Esophagus muscularis mucosa (tissue), 4 donors: ENCODE measurements at regions of chr9 and their contacts with region 1.

Region 1: DNA sequence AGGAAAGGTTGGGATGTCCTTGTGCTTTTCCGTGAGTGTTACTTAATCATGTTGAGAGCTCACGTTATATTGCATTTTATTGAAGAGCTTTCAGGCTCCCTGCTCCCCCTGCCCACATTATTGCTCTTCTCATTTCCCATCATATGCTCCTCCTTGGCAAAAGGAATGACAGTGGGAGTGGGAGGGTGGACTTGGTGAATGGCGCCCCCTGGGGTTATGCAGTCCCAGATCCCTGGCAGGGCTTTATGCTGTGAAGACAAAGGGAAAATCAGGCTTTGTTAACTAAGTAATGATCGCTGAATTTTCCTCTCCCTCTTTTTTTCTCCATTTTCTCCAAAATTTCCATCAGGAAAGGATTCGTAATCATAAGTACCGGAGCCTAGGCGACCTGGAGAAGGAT is 166.6 kb downstream of the SMARCA2 start:
- DNase-seq: no peak
- H3K4me3 ChIP-seq: no peak overlapping the region
- H3K27ac ChIP-seq: no peak overlapping the region
- H3K4me1 ChIP-seq: peaks cover 0 to 33% (median 18%) of the 10 kb centered on the region in 4 donors
- H3K27me3 ChIP-seq: no peaks in the 10 kb centered on the region
- CTCF ChIP-seq: peak; percentile 36 to 53 (median 40)
- EP300 ChIP-seq: no peak
- POLR2A ChIP-seq: no peak

Region 2: DNA sequence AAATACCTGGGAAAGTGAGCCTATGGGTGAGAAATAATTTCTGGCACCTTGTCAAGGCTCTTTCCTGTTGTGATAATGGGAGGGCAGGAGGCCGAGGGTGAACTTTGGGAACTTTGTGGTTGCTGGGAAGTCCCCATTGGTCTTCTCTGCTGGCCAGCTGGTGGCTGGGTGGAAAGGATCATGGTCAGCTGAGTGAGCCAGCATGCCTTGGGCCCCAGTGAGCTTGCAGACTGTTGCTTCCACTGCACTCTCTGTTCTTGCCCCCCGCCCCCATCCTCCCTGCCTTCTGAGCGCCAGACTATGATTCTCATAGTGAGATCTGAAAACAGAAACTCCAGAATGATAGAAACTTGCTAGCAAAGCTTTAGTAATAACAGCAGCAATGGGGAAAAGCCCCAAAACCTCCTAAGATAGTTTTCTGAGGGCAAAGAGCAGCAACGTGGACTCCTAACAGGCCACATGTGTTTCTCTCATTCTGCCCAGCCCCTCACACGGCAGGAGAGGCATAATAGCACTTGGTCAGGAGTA is 305.8 kb before region 1 on chr9:
- intact Hi-C with region 1: no loop called
- DNase-seq: no peak
- H3K4me3 ChIP-seq: no peak overlapping the region
- H3K27ac ChIP-seq: no peak overlapping the region
- H3K4me1 ChIP-seq: no peaks in the 10 kb centered on the region
- H3K27me3 ChIP-seq: peaks cover 0 to 3% (median 0%) of the 10 kb centered on the region in 4 donors
- CTCF ChIP-seq: no peak
- EP300 ChIP-seq: no peak
- POLR2A ChIP-seq: no peak

Region 3: DNA sequence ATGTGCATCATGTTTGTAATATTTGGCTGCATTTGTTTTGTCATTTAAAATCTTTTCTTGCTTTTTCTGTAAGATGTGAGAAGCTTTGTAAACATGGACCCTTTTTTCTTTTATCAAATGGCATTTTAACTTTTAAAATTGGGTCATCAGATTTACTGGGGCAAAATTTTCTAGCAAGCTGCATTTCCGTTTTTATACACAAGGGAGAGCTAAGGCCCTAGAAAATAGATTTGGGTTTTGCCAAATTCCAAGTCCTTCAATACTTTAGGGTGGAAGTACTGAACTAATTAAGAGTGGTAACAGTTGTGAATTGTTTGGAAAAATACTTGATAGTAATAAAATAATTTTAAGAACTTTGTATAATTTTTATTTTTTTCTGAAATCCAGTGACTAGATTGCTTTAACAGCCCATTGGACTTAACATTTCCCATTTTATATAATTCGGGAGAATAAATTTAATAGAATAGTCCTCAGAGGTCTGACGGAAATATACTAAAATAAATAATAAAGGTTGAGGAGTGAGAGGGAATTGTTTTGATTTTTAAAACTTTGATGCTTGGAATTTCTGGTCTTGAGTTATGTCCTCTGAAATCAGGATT is 49.2 kb before region 1 on chr9:
- intact Hi-C with region 1: loop called (anchors 5 kb)
- DNase-seq: no peak
- H3K4me3 ChIP-seq: no peak overlapping the region
- H3K27ac ChIP-seq: no peak overlapping the region
- H3K4me1 ChIP-seq: peaks cover 34 to 67% (median 52%) of the 10 kb centered on the region in 4 donors
- H3K27me3 ChIP-seq: no peaks in the 10 kb centered on the region
- CTCF ChIP-seq: peak; percentile 80 to 88 (median 80)
- EP300 ChIP-seq: no peak
- POLR2A ChIP-seq: no peak